ENCODE measurements at regions of chr19 and their contacts with region 1.

Region 1: GRCh38 chr19:7540761-7541491 is 5.4 kb downstream of the PNPLA6 start:
- DNase-seq: peak; percentile 43
- H3K4me3 ChIP-seq: no peak overlapping the region
- H3K27ac ChIP-seq: no peak overlapping the region
- H3K4me1 ChIP-seq: no peaks in the 10 kb centered on the region
- H3K27me3 ChIP-seq: no peaks in the 10 kb centered on the region
- CTCF ChIP-seq: no peak

Region 2: GRCh38 chr19:7366701-7367420 is 174.1 kb before region 1 on chr19:
- CTCF ChIA-PET with region 1: interaction called, 14 read pairs
- POLR2A ChIA-PET with region 1: no interaction called
- intact Hi-C with region 1: no loop called
- DNase-seq: peak; percentile 60
- H3K4me3 ChIP-seq: no peak overlapping the region
- H3K27ac ChIP-seq: no peak overlapping the region
- H3K4me1 ChIP-seq: no peaks in the 10 kb centered on the region
- H3K27me3 ChIP-seq: peaks cover 14% of the 10 kb centered on the region
- CTCF ChIP-seq: peak; percentile 56

Region 3: DNA sequence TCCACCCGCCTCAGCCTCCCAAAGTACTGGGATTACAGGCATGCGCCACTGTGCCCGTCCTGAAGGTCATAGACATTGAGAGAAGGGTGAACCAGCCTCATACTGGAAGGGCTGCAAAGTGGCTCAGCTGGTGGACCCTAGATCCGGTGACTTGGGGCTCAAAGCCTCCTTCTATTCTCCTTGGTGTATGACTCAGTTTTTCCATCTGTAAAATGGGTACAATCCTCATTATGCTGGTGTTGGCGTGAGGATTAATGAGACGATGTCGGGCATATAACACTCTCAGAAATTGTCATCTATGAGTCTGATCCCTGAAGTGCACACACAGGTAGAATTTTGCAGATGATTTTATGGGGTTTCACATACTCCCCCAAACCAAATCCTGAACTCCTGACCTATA is 48.9 kb after region 1 on chr19:
- CTCF ChIA-PET with region 1: no interaction called
- POLR2A ChIA-PET with region 1: interaction called, 17 read pairs
- intact Hi-C with region 1: no loop called
- DNase-seq: no peak
- H3K4me3 ChIP-seq: no peak overlapping the region
- H3K27ac ChIP-seq: no peak overlapping the region
- H3K4me1 ChIP-seq: no peaks in the 10 kb centered on the region
- H3K27me3 ChIP-seq: peaks cover 15% of the 10 kb centered on the region
- CTCF ChIP-seq: no peak